ENCODE measurements at regions of chr17 and their contacts with region 1.

Region 1: DNA sequence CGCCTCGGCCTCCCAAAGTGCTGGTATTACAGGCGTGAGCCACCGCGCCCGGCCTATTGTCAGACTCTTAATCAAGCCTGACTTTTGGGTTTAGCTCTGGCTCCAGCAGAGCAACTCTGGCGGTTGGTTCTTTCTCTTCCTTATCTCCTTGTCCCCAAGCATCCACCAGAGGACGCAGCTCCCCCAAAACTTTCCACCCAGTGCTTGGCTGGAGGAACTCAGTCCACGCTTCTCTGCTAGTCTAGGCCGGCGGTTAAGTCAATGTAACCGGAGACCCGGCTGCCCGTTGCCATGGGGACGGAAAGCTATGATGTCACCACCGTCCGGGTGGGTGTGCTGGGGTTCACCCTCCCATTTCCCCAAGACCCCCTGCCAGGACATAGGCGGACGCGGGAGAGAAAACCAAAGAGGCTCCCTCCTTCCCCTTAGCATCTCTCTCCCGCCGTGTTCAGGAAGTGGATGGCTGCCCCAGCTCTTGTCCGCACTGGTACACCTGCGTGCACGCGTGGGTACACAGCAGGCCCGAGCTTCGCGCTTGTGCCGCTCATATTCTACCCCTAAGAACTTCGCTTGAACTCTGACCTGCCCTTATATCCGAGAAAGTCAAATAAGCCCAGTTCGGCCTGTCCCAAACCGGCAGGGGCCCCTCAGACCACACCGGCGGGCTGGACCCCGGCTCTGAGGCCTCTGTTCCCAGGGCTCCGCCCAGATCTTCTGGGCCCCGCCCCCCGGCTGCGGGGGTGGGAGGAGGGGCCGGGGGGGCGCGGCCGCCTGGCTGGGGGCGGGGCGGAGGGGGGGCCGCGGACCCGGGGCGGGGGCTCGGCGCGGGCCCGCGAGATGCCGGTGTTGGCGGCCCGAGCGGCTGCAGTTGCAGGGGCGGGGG is at the start of gene RND2:
- DNase-seq: peak; percentile 75 to 89
- ATAC-seq: peak; percentile 68 to 77 (median 72)
- H3K4me3 ChIP-seq: peak within 1 kb of the TSS; percentile 63
- H3K4me3 Mint-ChIP-seq: peak within 1 kb of the TSS; percentile 95
- H3K27ac ChIP-seq: peak within 1 kb of the TSS; percentile 59
- H3K27ac Mint-ChIP-seq: peak within 1 kb of the TSS; percentile 81 to 95
- H3K4me1 ChIP-seq: peaks cover 34% of the 10 kb centered on the region
- H3K4me1 Mint-ChIP-seq: peaks cover 10 to 32% of the 10 kb centered on the region in 2 donors
- H3K27me3 ChIP-seq: no peaks in the 10 kb centered on the region
- H3K27me3 Mint-ChIP-seq: no peaks in the 10 kb centered on the region
- CTCF ChIP-seq: peak; percentile 49
- total RNA-seq, gene RND2: 0.12 to 0.58 (median 0.14) TPM

Region 2: GRCh38 chr17:42953669-42954068 is 71.0 kb before region 1 on chr17:
- intact Hi-C with region 1: no loop called
- DNase-seq: no peak
- ATAC-seq: no peak
- H3K4me3 ChIP-seq: no peak overlapping the region
- H3K4me3 Mint-ChIP-seq: no peak overlapping the region
- H3K27ac ChIP-seq: no peak overlapping the region
- H3K27ac Mint-ChIP-seq: no peak overlapping the region
- H3K4me1 ChIP-seq: no peaks in the 10 kb centered on the region
- H3K4me1 Mint-ChIP-seq: no peaks in the 10 kb centered on the region
- H3K27me3 ChIP-seq: no peaks in the 10 kb centered on the region
- H3K27me3 Mint-ChIP-seq: no peaks in the 10 kb centered on the region
- CTCF ChIP-seq: no peak

Region 3: DNA sequence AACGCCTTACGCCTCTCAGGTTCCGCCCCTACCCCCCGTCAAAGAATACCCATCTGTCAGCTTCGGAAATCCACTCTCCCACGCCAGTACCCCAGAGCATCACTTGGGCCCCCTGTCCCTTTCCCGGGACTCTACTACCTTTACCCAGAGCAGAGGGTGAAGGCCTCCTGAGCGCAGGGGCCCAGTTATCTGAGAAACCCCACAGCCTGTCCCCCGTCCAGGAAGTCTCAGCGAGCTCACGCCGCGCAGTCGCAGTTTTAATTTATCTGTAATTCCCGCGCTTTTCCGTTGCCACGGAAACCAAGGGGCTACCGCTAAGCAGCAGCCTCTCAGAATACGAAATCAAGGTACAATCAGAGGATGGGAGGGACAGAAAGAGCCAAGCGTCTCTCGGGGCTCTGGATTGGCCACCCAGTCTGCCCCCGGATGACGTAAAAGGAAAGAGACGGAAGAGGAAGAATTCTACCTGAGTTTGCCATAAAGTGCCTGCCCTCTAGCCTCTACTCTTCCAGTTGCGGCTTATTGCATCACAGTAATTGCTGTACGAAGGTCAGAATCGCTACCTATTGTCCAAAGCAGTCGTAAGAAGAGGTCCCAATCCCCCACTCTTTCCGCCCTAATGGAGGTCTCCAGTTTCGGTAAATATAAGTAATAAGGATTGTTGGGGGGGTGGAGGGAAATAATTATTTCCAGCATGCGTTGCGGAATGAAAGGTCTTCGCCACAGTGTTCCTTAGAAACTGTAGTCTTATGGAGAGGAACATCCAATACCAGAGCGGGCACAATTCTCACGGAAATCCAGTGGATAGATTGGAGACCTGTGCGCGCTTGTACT is 100.7 kb after region 1 on chr17 and contains the start of gene BRCA1:
- intact Hi-C with region 1: loop called (anchors 10 kb)
- DNase-seq: peak; percentile 89 to 98
- ATAC-seq: peak; percentile 99 to 100 (median 99)
- H3K4me3 ChIP-seq: peak within 1 kb of the TSS; percentile 55
- H3K4me3 Mint-ChIP-seq: peak within 1 kb of the TSS; percentile 100
- H3K27ac ChIP-seq: peak within 1 kb of the TSS; percentile 67
- H3K27ac Mint-ChIP-seq: peak within 1 kb of the TSS; percentile 98
- H3K4me1 ChIP-seq: peaks cover 19% of the 10 kb centered on the region
- H3K4me1 Mint-ChIP-seq: peaks cover 20 to 29% of the 10 kb centered on the region in 2 donors
- H3K27me3 ChIP-seq: no peaks in the 10 kb centered on the region
- H3K27me3 Mint-ChIP-seq: no peaks in the 10 kb centered on the region
- CTCF ChIP-seq: no peak
- total RNA-seq, gene BRCA1: 5.7 to 9.9 (median 8.6) TPM

Region 4: DNA sequence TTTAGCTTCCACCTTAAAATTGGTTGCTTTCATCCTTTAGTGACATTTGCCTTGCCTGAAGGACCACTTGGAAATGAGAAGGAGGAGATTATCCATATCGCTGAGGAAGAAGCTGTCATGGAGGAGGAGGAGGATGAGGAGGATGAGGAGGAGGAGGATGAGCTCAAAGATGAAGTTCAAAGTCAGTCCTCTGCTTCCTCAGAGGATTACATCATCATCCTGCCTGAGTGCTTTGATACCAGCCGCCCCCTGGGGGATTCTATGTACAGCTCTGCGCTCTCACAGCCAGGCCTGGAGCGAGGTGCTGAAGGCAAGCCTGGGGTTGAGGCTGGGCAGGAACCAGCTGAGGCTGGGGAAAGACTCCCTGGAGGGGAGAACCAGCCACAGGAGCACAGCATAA is 175.5 kb after region 1 on chr17:
- intact Hi-C with region 1: loop called (anchors 10 kb)
- DNase-seq: no peak
- ATAC-seq: no peak
- H3K4me3 ChIP-seq: no peak overlapping the region
- H3K4me3 Mint-ChIP-seq: no peak overlapping the region
- H3K27ac ChIP-seq: no peak overlapping the region
- H3K27ac Mint-ChIP-seq: no peak overlapping the region
- H3K4me1 ChIP-seq: no peaks in the 10 kb centered on the region
- H3K4me1 Mint-ChIP-seq: peaks cover 0 to under 1% of the 10 kb centered on the region in 2 donors
- H3K27me3 ChIP-seq: no peaks in the 10 kb centered on the region
- H3K27me3 Mint-ChIP-seq: no peaks in the 10 kb centered on the region
- CTCF ChIP-seq: no peak

Region 5: DNA sequence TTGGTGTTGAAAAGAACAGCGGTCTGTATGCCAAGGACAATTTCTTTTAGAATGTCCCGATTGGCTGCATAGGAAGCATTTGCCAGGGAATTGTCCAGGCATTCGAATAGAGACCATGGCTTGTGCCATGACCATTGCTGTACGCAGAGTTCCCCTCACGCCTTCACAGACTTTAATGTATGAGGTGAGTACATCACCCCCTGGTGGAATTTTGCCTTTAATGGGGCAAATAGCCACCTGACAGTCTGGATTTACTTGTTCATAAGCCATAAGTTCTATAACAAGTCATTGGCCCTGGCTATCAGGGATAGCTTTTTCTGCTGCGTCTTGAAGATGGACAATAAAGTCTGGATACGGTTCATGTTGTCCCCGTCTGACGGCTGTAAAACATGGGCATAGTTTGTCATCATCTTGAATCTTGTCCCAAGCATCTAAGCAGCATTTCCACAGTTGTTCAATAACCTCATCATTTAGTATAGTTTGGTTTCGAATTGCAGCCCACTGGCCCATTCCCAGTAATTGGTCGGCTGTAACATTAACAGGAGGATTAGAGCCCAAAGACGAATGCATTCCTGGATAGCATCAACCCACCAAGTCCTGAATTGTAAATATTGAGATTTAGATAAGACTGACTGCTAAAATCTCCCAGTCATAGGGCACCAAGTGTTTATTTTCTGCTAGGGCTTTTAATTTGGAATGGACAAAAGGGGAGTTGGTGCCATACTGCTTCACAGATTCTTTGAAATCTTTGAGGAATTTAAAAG is 306.4 kb after region 1 on chr17:
- intact Hi-C with region 1: loop called (anchors 5 kb)
- DNase-seq: peak in 1 of 2 donors; percentile 14
- ATAC-seq: no peak
- H3K4me3 ChIP-seq: no peak overlapping the region
- H3K4me3 Mint-ChIP-seq: no peak overlapping the region
- H3K27ac ChIP-seq: no peak overlapping the region
- H3K27ac Mint-ChIP-seq: no peak overlapping the region
- H3K4me1 ChIP-seq: peaks cover 7% of the 10 kb centered on the region
- H3K4me1 Mint-ChIP-seq: peaks cover 8 to 9% of the 10 kb centered on the region in 2 donors
- H3K27me3 ChIP-seq: no peaks in the 10 kb centered on the region
- H3K27me3 Mint-ChIP-seq: peaks cover 5 to 20% of the 10 kb centered on the region in 2 donors
- CTCF ChIP-seq: no peak

Region 6: GRCh38 chr17:43360739-43361505 is 336.3 kb after region 1 on chr17:
- intact Hi-C with region 1: loop called (anchors 10 kb)
- DNase-seq: peak; percentile 77 to 95
- ATAC-seq: peak in 2 of 3 donors; percentile 73 to 75
- H3K4me3 ChIP-seq: peak overlapping the region; percentile 54
- H3K4me3 Mint-ChIP-seq: peak overlapping the region; percentile 91
- H3K27ac ChIP-seq: peak overlapping the region; percentile 98
- H3K27ac Mint-ChIP-seq: peak overlapping the region; percentile 98 to 99
- H3K4me1 ChIP-seq: peaks cover 10% of the 10 kb centered on the region
- H3K4me1 Mint-ChIP-seq: peaks cover 29% of the 10 kb centered on the region in 2 donors
- H3K27me3 ChIP-seq: no peaks in the 10 kb centered on the region
- H3K27me3 Mint-ChIP-seq: peaks cover 0 to 3% of the 10 kb centered on the region in 2 donors
- CTCF ChIP-seq: no peak

Measured in natural killer cell (primary cell).